MCF 10A (cell line): ENCODE measurements at regions of chr3 and their contacts with region 1.

Region 1: GRCh38 chr3:148778926-148779325 is 48.7 kb upstream of the CPB1 start:
- DNase-seq: no peak
- H3K4me3 Mint-ChIP-seq: no peak overlapping the region
- H3K27ac Mint-ChIP-seq: no peak overlapping the region
- H3K4me1 Mint-ChIP-seq: no peaks in the 10 kb centered on the region
- H3K27me3 Mint-ChIP-seq: peaks cover 11% of the 10 kb centered on the region
- CTCF ChIP-seq: no peak

Region 2: GRCh38 chr3:148820369-148820768 is 41.4 kb after region 1 on chr3:
- CTCF ChIA-PET with region 1: no interaction called
- POLR2A ChIA-PET with region 1: no interaction called
- intact Hi-C with region 1: loop called (anchors 5 kb)
- DNase-seq: no peak
- H3K4me3 Mint-ChIP-seq: no peak overlapping the region
- H3K27ac Mint-ChIP-seq: no peak overlapping the region
- H3K4me1 Mint-ChIP-seq: no peaks in the 10 kb centered on the region
- H3K27me3 Mint-ChIP-seq: peaks cover 81% of the 10 kb centered on the region
- CTCF ChIP-seq: no peak

Region 3: GRCh38 chr3:148924562-148924961 is 145.6 kb after region 1 on chr3:
- CTCF ChIA-PET with region 1: no interaction called
- POLR2A ChIA-PET with region 1: no interaction called
- intact Hi-C with region 1: no loop called
- DNase-seq: no peak
- H3K4me3 Mint-ChIP-seq: no peak overlapping the region
- H3K27ac Mint-ChIP-seq: no peak overlapping the region
- H3K4me1 Mint-ChIP-seq: no peaks in the 10 kb centered on the region
- H3K27me3 Mint-ChIP-seq: peaks cover 73% of the 10 kb centered on the region
- CTCF ChIP-seq: no peak

Region 4: DNA sequence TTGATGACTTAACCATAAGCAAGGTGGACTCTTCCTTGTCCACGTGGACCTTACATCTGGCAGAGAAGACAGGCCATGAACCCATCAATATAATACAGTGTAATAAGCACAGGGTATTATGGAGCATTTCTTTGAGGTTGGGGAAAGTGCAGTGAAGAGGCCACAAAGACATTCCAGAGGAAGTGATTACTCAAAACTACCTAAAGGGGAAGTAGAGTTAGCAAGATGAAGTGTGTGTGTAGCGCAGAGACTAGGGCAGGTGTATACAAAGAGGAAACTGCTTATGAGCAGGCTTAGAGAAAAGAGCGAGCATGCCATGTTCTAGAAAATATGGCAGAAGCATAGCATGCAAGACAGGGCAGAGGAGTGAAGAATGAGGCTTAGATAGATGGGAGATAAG is 424.8 kb after region 1 on chr3:
- CTCF ChIA-PET with region 1: no interaction called
- POLR2A ChIA-PET with region 1: no interaction called
- intact Hi-C with region 1: no loop called
- DNase-seq: no peak
- H3K4me3 Mint-ChIP-seq: no peak overlapping the region
- H3K27ac Mint-ChIP-seq: no peak overlapping the region
- H3K4me1 Mint-ChIP-seq: no peaks in the 10 kb centered on the region
- H3K27me3 Mint-ChIP-seq: no peaks in the 10 kb centered on the region
- CTCF ChIP-seq: no peak